ENCODE measurements at regions of chr2 and their contacts with region 1.

Region 1: DNA sequence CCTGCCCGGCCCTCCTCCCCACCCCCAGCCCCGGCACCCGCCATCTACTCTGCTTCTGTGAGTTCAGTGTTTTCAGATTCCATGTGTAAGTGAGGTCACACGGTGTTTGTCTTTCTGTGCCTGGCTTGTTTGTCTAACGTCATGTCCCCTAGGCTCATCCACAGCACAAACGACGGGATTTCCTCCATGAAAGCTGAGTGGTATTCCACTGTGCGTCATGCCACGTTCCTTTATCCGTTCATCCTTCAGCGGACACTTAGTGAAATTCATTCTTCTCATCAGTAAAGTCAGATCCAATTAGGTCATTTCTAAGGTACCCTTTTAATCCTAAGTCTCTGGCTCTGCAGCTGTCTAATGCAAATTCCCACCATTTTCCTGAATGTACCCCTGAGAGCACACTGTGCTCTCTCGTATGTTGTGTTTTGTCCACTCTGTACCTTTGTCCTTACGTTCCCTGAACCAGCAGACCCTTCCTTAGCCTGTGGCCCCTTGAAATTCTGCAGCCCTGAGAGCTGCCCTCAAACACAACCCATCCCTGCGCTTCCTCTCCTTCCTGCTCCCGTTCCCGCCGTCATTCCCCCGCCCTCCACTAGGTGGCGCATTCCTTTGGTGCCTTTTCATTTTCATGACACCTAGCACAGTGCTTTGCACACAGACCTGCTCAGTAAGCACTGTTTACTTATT is 44.1 kb downstream of the TRAPPC12 start:
- DNase-seq: peak; percentile 12 to 60
- ATAC-seq: peak; percentile 66 to 79
- H3K4me3 ChIP-seq: no peak overlapping the region
- H3K27ac ChIP-seq: no peak overlapping the region
- H3K4me1 ChIP-seq: no peaks in the 10 kb centered on the region
- H3K27me3 ChIP-seq: no peaks in the 10 kb centered on the region
- CTCF ChIP-seq: peak; percentile 81 to 99 (median 90)
- POLR2A ChIP-seq: no peak

Region 2: DNA sequence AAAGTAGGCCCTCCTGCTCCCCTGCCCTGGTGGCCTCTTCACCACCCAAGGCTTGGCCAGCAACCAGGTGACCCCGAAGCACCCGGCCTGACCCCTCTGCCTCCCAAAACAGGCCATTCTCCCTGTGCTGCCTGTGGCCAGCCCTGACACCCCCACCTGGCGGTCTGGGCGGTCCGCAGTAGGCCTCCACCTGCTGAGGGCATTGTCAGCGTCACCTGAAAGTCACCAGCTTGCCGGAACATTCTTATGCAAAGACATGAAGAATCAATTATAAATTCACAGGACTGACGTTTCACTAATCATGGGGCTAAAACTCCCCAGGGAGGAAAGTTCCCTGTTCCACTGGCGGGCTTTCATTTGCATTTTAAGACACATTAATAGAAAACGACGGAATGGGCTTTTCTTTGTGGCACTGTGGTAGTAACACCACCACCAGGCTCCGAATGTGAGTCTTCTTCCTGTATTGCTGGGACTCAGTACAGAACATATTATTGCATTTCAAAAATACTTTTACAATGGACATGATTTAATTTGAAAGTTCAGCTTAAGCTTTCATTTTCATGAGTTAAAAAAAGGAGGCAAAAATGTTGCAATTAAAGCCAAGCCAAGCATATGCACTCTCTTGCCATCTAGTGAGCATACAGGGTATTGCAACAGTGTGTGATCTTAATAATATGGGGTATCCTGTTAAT is 38.3 kb after region 1 on chr2:
- in situ Hi-C with region 1: loop called in 1 of 4 experiments (anchors 5 kb)
- intact Hi-C with region 1: loop called (anchors 1 kb)
- DNase-seq: peak in 1 of 2 donors; percentile 17
- ATAC-seq: no peak
- H3K4me3 ChIP-seq: no peak overlapping the region
- H3K27ac ChIP-seq: peak overlapping the region in 3 of 4 donors; percentile 75 to 86 (median 79)
- H3K4me1 ChIP-seq: peaks cover 31 to 48% of the 10 kb centered on the region in 2 donors
- H3K27me3 ChIP-seq: no peaks in the 10 kb centered on the region
- CTCF ChIP-seq: peak; percentile 55 to 98 (median 79)
- POLR2A ChIP-seq: no peak

Region 3: DNA sequence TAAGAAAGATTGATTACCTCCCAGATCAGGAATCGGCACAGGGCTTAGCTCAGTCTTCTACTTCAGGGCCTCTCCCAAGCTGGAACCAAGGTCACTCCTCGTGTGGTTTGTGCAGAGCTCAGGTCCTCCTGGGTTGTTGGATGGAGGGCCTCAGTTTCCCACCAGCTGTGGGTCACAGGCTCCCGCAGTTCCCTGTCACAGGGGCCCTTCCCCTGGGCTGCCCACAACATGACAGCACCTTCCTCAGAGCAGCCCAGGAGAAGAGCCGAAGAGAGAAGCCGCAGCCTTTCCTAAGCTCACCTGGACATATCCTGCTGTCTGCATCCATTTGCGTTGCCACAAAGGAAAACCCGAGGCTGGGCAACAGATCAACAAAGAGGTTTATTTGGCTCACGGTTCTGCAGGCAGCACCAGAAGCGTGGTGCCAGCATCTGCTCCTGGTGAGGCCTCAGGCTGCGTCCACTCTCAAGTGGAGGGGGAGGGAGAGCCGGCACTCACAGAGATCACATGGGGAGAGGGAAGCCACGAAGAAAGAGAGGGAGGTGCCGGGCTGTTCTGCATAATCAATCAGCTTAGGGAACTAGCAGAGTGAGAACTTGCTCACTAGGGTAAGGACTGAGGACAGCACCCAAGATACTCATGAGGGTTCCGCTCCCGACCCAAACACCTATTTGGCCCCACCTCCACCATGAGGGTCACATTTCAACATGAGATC is 221.4 kb after region 1 on chr2:
- in situ Hi-C with region 1: loop called in 1 of 4 experiments (anchors 5 kb)
- intact Hi-C with region 1: loop called (anchors 2 kb)
- DNase-seq: no peak
- ATAC-seq: no peak
- H3K4me3 ChIP-seq: no peak overlapping the region
- H3K27ac ChIP-seq: no peak overlapping the region
- H3K4me1 ChIP-seq: no peaks in the 10 kb centered on the region
- H3K27me3 ChIP-seq: no peaks in the 10 kb centered on the region
- CTCF ChIP-seq: no peak
- POLR2A ChIP-seq: no peak